ENCODE measurements at regions of chr9 and their contacts with region 1.

Region 1: GRCh38 chr9:763692-764524 is 77.6 kb upstream of the DMRT1 start:
- DNase-seq: peak; percentile 70
- ATAC-seq: peak; percentile 96

Region 2: DNA sequence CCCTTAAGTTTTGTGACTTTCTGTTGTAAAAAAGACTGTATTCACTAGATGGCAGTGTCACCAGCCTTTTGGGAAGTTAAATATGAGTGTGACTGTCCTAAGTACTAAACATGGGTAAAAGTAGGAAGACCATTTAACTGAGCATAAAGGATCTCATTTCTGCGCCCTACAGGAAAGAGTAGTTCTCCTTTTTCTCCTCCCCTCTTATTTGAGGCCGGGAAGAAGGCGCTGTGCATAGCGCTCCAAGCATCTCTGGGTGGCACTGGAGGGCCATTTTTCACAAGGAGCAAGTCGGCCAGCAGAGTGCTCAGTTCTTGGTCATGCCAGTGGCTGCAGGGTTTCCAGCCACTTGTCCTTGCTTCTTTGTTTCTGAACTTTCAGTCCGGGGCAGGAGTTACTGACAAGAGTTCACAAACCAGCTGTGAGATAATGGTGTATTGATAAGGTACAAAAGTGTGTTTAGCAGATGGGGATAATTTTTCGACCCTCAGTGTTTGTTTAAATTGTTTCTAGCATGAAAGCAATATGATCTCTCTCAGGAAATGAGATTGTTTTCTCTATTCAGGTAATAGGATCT is 150.0 kb before region 1 on chr9:
- intact Hi-C with region 1: loop called (anchors 1 kb)
- DNase-seq: peak; percentile 83
- ATAC-seq: peak; percentile 97

Region 3: GRCh38 chr9:801399-802071 is 37.6 kb after region 1 on chr9:
- intact Hi-C with region 1: no loop called
- DNase-seq: no peak
- ATAC-seq: no peak

Measured in sciatic nerve (tissue), 2 donors.